Gastrocnemius medialis (tissue), 4 donors: ENCODE measurements at regions of chr17 and their contacts with region 1.

Region 1: GRCh38 chr17:76278952-76279741 is 14.0 kb downstream of the UBALD2 start:
- DNase-seq: peak; percentile 82 to 89
- ATAC-seq: peak; percentile 50 to 70
- H3K4me3 ChIP-seq: no peak overlapping the region
- H3K27ac ChIP-seq: peak overlapping the region; percentile 54 to 79 (median 73)
- H3K4me1 ChIP-seq: peaks cover 20 to 32% of the 10 kb centered on the region in 2 donors
- H3K27me3 ChIP-seq: no peaks in the 10 kb centered on the region
- CTCF ChIP-seq: peak; percentile 96 to 100 (median 99)
- POLR2A ChIP-seq: no peak

Region 2: DNA sequence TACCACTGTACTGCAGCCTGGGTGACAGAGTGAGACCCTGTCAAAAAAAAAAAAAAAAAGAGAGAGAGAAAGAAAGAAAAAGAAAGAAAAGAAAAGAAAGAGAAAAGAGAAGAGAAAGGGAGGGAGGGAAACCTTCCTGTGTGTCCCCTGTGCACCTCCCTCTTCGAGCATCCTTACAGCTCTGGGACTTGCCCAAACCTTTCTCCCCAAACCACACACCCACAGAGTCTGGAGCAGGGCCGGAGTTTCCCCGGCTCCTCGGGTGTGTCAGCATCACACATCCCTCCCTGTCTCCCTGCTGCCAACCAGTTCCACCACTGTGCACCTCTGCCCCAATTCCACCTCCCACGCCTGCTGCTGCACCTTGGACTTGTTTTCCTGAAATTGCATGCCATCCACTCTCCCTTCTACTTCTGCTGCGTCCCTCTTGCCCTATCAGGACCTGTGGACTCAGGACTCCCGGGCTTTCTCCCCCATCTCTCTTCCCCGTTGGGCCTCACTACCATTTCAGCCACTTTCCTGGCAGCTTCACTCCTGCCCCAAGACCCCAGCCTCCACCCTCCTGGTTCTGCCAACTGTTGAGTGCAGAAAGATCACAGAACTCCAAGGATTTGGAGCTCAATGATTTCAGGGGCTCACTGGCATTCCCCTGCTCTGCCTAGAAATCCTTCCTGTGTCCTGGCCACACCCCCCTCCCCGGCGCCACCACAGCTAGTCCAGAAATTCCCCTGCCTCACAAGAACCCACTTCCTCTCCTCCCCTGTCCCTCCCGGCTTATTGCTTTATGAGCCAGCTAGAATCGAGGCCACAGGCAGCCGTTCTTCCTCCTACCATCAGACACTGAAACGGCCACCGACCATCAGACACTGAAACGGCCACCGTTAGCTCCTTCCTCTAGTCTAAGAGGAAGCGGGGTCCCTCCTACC is 282.2 kb before region 1 on chr17:
- in situ Hi-C with region 1: no loop called
- intact Hi-C with region 1: no loop called
- DNase-seq: no peak
- ATAC-seq: no peak
- H3K4me3 ChIP-seq: no peak overlapping the region
- H3K27ac ChIP-seq: no peak overlapping the region
- H3K4me1 ChIP-seq: no peaks in the 10 kb centered on the region
- H3K27me3 ChIP-seq: no peaks in the 10 kb centered on the region
- CTCF ChIP-seq: no peak
- POLR2A ChIP-seq: no peak

Region 3: GRCh38 chr17:76121932-76122430 is 157.2 kb before region 1 on chr17:
- in situ Hi-C with region 1: no loop called
- intact Hi-C with region 1: loop called (anchors 1 kb)
- DNase-seq: no peak
- ATAC-seq: peak; percentile 24 to 44
- H3K4me3 ChIP-seq: peak overlapping the region; percentile 28 to 50 (median 42)
- H3K27ac ChIP-seq: peak overlapping the region in 2 of 4 donors; percentile 10 to 39
- H3K4me1 ChIP-seq: peaks cover 3% of the 10 kb centered on the region in 2 donors
- H3K27me3 ChIP-seq: no peaks in the 10 kb centered on the region
- CTCF ChIP-seq: no peak
- POLR2A ChIP-seq: no peak

Region 4: GRCh38 chr17:76141212-76142038 is 137.7 kb before region 1 on chr17 and contains the start of gene FOXJ1:
- in situ Hi-C with region 1: no loop called
- intact Hi-C with region 1: loop called (anchors 5 kb)
- DNase-seq: peak; percentile 69 to 86
- ATAC-seq: peak; percentile 84 to 89
- H3K4me3 ChIP-seq: peak within 1 kb of the TSS; percentile 50 to 68 (median 58)
- H3K27ac ChIP-seq: peak within 1 kb of the TSS in 1 of 4 donors; percentile 3
- H3K4me1 ChIP-seq: peaks cover 23 to 28% of the 10 kb centered on the region in 2 donors
- H3K27me3 ChIP-seq: peaks cover 46% of the 10 kb centered on the region in 3 donors
- CTCF ChIP-seq: no peak
- POLR2A ChIP-seq: no peak
- total RNA-seq, gene FOXJ1: 0.16 to 0.62 TPM in 2 of 4 donors, not detected in the others

Region 5: GRCh38 chr17:76182016-76182764 is 97.0 kb before region 1 on chr17:
- in situ Hi-C with region 1: loop called in 1 of 4 experiments (anchors 10 kb)
- intact Hi-C with region 1: loop called (anchors 2 kb)
- DNase-seq: peak; percentile 75 to 89
- ATAC-seq: peak; percentile 85 to 87
- H3K4me3 ChIP-seq: no peak overlapping the region
- H3K27ac ChIP-seq: peak overlapping the region; percentile 8 to 39 (median 26)
- H3K4me1 ChIP-seq: peaks cover 17 to 35% of the 10 kb centered on the region in 2 donors
- H3K27me3 ChIP-seq: no peaks in the 10 kb centered on the region
- CTCF ChIP-seq: peak; percentile 74 to 84 (median 77)
- POLR2A ChIP-seq: no peak

Region 6: DNA sequence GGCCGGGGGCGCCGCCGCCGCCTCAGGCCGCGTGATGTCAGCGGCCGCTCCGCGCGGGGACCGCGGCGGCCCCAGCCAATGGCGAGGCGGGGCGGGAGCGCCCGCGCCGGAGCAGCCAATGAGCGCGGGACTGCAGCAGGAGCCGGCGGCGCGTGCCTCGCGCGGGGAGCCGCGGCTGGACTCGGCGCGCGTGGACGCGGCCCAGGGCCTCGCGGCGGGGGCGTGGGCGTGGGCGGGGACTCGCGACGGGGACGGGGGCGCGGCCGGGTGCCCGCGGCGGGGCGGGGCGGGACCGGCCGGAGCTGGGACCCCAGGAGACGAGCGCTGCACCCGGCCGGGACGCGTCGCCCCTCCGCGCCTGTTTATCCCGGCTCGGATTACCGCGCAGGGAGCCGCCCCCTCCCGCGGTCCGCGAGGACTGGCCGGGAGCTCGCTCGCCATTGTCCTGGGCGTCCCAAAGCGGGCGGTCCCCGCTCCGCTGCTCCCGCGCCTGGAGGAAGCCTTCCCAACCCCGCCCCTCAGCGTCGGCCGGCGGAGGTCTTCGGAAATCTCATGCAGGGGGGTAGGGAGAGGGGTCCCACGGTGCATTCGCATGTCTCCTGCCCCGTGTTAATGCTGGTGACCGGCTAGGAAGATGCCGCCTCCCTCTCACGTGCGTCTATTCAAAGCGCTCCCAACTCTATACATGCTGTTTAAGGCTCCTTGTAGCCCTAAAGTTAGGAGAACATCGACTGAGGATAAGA is 38.5 kb before region 1 on chr17 and contains the start of gene RNF157:
- in situ Hi-C with region 1: no loop called
- intact Hi-C with region 1: loop called (anchors 2 kb)
- DNase-seq: peak; percentile 60 to 74
- ATAC-seq: peak; percentile 76 to 78
- H3K4me3 ChIP-seq: peak within 1 kb of the TSS; percentile 61 to 85 (median 75)
- H3K27ac ChIP-seq: peak within 1 kb of the TSS; percentile 93 to 95 (median 94)
- H3K4me1 ChIP-seq: peaks cover 21 to 29% of the 10 kb centered on the region in 2 donors
- H3K27me3 ChIP-seq: no peaks in the 10 kb centered on the region
- CTCF ChIP-seq: no peak
- POLR2A ChIP-seq: peak; percentile 78 to 88
- total RNA-seq, gene RNF157: 50.5 to 142 (median 85.3) TPM

Region 7: DNA sequence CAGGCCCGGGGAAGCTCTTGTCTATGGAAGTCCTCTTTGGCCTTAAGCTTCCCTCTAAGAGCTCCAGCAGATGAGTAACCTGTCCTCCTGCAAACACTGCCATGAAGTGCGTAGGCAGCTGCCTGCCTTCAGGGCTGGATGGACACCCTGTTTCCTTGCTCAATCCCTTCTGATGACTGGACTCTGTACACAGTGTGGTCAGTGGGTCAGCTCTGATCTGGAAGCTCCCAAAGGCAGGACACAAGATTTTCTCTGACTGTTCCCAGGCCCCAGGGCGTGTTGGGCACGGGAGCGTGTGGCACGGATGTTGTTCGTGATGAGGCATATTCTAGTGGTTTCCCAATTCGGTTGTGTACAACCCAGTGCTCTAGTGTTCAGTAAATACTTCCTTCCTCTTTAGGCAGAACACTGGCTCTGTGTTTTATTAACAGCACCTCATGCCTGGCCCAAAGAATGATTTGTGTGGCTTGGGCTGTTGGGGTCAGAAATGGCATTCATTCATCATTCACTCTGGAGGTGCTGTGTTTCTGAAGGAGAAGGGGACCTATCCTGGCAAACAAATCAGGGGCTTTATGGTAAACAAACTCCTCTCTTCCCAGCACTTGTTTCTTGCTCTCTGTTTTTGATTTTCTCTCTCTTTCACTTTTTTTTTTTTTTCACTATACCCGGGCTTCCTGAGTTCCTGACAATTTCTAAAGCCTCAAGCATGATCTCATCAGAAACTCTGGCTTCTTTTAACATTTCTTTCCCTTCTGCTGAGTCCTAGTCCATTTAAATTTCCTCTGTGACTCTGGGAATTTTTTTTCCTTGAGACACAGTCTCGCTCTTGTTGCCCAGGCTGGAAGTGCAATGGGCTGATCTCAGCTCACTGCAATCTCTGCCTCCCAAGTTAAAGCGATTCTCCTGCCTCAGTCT is 26.9 kb before region 1 on chr17:
- in situ Hi-C with region 1: no loop called
- intact Hi-C with region 1: loop called (anchors 2 kb)
- DNase-seq: peak; percentile 95 to 97
- ATAC-seq: peak; percentile 85 to 88
- H3K4me3 ChIP-seq: peak overlapping the region in 1 of 4 donors; percentile 4
- H3K27ac ChIP-seq: peak overlapping the region; percentile 90 to 97 (median 94)
- H3K4me1 ChIP-seq: peaks cover 49 to 52% of the 10 kb centered on the region in 2 donors
- H3K27me3 ChIP-seq: no peaks in the 10 kb centered on the region
- CTCF ChIP-seq: no peak
- POLR2A ChIP-seq: peak; percentile 60 to 72